ENCODE measurements at regions of chr2 and their contacts with region 1.

Region 1: DNA sequence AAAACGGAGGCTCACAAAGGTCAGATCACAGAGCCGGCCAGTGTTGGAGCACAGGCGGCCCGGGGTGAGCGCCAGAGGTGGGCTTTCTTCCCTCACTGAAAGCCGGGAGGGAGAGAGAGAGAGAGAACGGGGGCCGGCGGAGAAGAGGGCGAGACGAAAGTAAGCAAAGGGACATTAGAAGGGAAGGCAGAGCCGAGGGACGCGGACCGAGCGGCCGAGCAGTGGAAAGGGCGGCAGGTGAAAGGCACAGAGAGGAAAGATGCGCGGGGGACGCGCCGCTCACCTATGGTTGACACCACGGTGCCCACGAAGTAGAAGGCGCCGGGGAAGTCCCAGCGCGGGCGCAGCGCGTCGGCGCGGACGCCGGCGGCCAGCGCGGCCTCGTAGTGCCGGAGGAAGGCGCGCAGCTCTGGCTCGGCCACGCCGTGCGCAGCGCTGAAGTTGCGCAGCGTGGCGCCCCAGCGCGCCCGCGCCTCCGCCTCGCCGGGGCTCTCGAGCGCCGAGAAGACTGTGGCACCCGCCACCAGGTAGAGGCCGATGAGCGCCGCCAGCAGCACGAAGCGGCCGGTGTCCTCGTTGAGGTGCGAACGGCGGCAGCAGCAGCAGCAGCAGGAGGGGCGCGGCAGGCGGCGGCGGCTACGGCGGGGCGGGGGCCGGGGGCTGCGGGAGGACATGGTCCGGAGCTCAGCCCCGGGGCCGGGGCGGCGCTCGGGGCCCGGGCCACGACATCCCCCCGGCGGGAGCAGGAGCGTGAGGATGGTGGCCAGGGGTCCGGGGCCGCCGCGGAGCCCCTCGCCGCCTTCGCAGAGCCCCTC is 166.9 kb downstream of the MSH2 start:
- DNase-seq: no peak
- H3K4me3 ChIP-seq: no peak overlapping the region
- H3K27ac ChIP-seq: no peak overlapping the region
- H3K4me1 ChIP-seq: peaks cover 15% of the 10 kb centered on the region
- H3K27me3 ChIP-seq: no peaks in the 10 kb centered on the region
- CTCF ChIP-seq: no peak
- EP300 ChIP-seq: no peak
- POLR2A ChIP-seq: no peak

Region 2: GRCh38 chr2:47404356-47404755 is 165.5 kb before region 1 on chr2:
- intact Hi-C with region 1: no loop called
- DNase-seq: no peak
- H3K4me3 ChIP-seq: peak overlapping the region; percentile 87
- H3K27ac ChIP-seq: no peak overlapping the region
- H3K4me1 ChIP-seq: peaks cover 10% of the 10 kb centered on the region
- H3K27me3 ChIP-seq: no peaks in the 10 kb centered on the region
- CTCF ChIP-seq: no peak
- EP300 ChIP-seq: no peak
- POLR2A ChIP-seq: no peak

Region 3: GRCh38 chr2:47457268-47457667 is 112.6 kb before region 1 on chr2:
- intact Hi-C with region 1: loop called in 1 of 4 experiments (anchors 5 kb)
- DNase-seq: no peak
- H3K4me3 ChIP-seq: no peak overlapping the region
- H3K27ac ChIP-seq: no peak overlapping the region
- H3K4me1 ChIP-seq: no peaks in the 10 kb centered on the region
- H3K27me3 ChIP-seq: no peaks in the 10 kb centered on the region
- CTCF ChIP-seq: no peak
- EP300 ChIP-seq: no peak
- POLR2A ChIP-seq: no peak

Measured in ovary (tissue), 10 donors.